ENCODE measurements at regions of chr3 and their contacts with region 1.

Region 1: GRCh38 chr3:126287536-126288241 is 69.5 kb downstream of the KLF15 start:
- DNase-seq: peak; percentile 11

Region 2: GRCh38 chr3:126129181-126129891 is 158.4 kb before region 1 on chr3:
- in situ Hi-C with region 1: no loop called
- DNase-seq: no peak

Region 3: DNA sequence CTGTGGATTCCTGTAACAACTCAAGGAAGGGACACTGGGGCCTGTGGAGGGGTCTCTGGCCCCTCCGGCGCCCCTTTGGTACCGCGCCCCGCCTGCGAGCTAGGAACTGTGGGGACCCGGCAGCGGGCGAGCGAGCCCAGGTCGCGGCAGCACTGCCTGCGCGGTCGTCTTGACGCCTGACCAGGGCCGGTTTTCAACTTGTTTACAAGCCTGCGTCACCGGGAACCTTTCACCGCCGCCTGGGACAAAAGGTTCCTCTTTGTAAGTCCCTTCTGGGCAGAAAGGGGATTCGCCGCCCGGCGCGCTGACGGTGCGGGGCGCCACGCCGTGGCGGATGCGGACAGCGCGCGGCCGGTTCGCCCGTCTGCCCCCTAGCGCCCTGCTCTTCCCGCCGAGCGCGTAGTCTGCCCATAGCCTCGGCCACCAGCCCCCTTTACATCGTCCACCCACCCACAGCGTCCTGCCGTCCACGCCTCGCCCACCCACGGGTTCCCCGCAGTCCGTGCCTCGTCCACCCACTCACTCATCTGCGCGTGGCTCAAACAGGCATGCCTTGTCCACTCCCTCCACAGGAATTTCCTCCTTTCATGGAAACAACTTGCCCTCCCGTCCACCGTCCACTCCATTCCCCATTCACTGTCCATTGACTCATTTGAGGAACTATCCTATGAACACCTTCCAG is 101.6 kb after region 1 on chr3:
- in situ Hi-C with region 1: loop called (anchors 25 kb)
- DNase-seq: peak; percentile 93

Region 4: GRCh38 chr3:126827121-126827520 is 539.4 kb after region 1 on chr3:
- in situ Hi-C with region 1: no loop called
- DNase-seq: no peak

Measured in SK-MEL-5 (cell line).